ENCODE measurements at regions of chr11 and their contacts with region 1.

Region 1: DNA sequence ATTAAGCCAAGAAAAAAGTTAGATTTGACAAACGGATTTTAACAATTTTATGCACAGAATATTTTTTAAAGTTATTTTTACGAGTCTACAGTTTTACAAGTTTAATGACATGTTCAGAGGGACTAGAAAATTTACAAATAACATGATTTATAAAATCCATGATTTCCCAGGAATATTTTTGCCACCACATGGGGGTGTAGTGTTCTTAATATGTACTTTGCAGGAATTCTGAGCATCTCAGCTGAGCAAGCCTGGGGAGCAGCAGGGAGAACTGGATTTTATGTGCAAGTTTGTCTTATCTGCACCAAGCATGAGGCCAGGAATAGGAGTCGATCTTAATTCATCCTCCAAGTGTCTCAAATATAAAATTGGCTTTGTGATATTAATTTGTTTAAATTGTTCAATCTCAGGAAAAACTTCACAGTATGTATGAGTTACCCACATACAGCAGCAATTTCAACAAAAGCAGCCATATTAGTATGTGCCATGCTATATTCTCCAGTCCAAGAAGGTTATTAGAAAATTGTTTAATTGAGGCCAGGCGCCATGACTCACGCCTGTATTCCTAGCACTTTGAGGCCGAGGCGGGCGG is 826.3 kb downstream of the DLG2 start:
- DNase-seq: peak; percentile 17 to 41
- ATAC-seq: peak; percentile 59 to 71; a peak in 3 of 6 replicates
- H3K4me3 ChIP-seq: no peak overlapping the region
- H3K27ac ChIP-seq: no peak overlapping the region
- H3K4me1 ChIP-seq: no peaks in the 10 kb centered on the region
- CTCF ChIP-seq: peak; percentile 50
- EP300 ChIP-seq: no peak
- POLR2A ChIP-seq: no peak
- RAD21 ChIP-seq: peak; percentile 63 to 69

Region 2: GRCh38 chr11:85040166-85040565 is 239.3 kb after region 1 on chr11:
- CTCF ChIA-PET with region 1: no interaction called
- POLR2A ChIA-PET with region 1: no interaction called
- DNase-seq: no peak
- ATAC-seq: no peak
- H3K4me3 ChIP-seq: no peak overlapping the region
- H3K27ac ChIP-seq: no peak overlapping the region
- H3K4me1 ChIP-seq: no peaks in the 10 kb centered on the region
- CTCF ChIP-seq: no peak
- EP300 ChIP-seq: no peak
- POLR2A ChIP-seq: no peak
- RAD21 ChIP-seq: no peak

Region 3: DNA sequence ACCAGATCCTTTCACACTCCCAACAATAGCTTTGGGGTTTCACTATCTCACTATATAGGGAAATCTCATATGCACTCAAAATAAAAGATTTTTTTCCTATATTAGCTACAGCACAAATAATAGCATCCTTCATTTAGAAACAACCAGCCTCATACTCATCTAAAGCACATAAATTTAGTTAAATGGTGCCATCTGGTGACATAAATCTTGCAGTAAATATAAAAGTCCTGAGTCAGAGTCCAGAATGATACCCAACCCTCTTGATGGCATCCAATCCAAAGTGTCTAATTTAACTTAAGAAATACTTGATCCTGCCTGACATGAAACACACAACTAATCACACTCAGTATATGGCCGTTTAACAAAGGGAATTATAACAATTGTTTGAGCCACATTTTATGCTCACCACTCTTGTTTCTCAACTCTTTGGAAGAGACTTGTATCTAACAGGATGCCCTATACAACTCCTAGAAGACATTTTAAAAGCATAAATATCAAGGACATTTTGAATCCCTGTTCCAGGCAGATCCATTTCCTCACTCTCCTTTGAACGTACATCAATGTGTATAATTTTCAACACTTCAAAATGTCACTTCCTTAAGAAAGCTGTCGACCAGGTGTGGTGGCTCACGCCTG is 790.1 kb after region 1 on chr11:
- CTCF ChIA-PET with region 1: interaction called, 15 read pairs
- POLR2A ChIA-PET with region 1: no interaction called
- DNase-seq: peak; percentile 51 to 60
- ATAC-seq: peak; percentile 96 to 97
- H3K4me3 ChIP-seq: no peak overlapping the region
- H3K27ac ChIP-seq: no peak overlapping the region
- H3K4me1 ChIP-seq: no peaks in the 10 kb centered on the region
- CTCF ChIP-seq: peak; percentile 69
- EP300 ChIP-seq: no peak
- POLR2A ChIP-seq: no peak
- RAD21 ChIP-seq: peak; percentile 74 to 83